Common myeloid progenitor, CD34-positive (primary cell): ENCODE measurements at regions of chr1 and their contacts with region 1.

Region 1: GRCh38 chr1:27102707-27103491 is 52.0 kb downstream of the SLC9A1 start:
- DNase-seq: peak; percentile 52 to 73 (median 62)
- H3K4me3 ChIP-seq: no peak overlapping the region
- H3K27ac ChIP-seq: no peak overlapping the region
- H3K4me1 ChIP-seq: peaks cover 0 to 35% (median 25%) of the 10 kb centered on the region in 4 experiments
- H3K27me3 ChIP-seq: no peaks in the 10 kb centered on the region

Region 2: DNA sequence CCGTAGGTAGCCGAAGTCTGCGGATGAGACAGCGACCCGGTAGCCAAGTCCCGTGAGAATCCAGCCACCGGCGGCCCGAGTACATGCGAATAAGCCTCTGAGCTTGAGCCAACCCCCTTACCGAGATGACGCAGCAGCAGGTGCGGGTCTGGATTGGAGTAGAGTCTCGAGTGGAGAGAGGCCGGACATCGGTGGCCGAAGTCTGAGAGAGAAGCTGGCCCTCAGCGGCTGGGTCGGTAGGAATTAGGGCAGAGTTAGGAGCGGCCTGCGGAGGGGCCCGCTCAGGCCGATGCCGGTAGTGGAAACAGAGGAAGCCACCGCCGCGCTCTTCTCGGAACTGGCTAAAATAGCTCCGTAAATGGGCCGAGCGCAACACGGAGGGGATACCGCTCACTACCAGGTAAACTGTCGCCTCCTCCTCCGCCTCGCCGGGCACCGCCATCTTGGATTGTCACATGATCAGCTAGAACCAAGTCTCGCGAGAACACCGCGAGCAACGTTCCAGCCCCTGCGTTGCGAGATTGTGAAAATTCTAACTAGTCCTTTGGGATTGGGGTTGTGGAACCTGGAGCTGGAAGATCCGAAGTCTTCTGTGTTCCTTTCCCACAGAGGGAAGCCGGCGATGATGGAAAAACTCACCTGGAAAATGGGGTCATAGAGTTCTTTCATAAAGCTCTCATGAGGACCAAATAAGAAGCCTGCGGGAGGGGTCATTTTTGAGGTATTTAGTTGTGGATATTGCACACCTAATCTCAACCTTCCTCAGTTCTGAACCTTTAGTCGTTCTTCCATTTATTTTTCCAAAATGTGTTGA is 202.7 kb before region 1 on chr1 and contains the start of gene GPATCH3:
- CTCF ChIA-PET with region 1: no interaction called
- POLR2A ChIA-PET with region 1: no interaction called
- DNase-seq: peak; percentile 88 to 93 (median 89)
- H3K4me3 ChIP-seq: peak within 1 kb of the TSS; percentile 86 to 97 (median 91)
- H3K27ac ChIP-seq: peak within 1 kb of the TSS; percentile 97 to 98
- H3K4me1 ChIP-seq: peaks cover 7 to 23% (median 19%) of the 10 kb centered on the region in 4 experiments
- H3K27me3 ChIP-seq: no peaks in the 10 kb centered on the region

Region 3: DNA sequence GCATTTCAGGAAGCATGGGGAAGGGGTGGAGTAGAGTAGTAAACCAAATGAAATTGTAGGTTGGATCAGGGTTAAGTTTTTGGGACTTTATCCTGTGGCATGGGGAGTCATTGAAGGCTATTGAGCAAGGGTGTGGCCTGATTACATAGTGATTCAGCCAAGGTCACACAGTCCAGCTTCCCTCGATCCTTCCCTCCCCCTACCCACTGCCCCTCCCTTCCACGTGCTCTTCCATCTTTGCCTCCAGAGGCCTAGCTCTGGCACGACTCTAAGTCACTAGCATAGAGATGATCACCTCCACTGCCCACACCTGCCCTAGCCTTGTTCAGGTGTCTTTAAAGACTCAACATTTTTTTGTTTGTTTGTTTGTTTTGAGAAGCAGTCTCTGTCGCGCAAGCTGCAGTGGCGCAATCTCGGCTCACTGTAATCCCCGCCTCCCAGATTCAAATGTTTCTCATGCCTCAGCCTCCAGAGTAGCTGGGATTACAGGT is 89.2 kb after region 1 on chr1:
- CTCF ChIA-PET with region 1: interaction called, 14 read pairs
- POLR2A ChIA-PET with region 1: no interaction called
- DNase-seq: no peak
- H3K4me3 ChIP-seq: no peak overlapping the region
- H3K27ac ChIP-seq: no peak overlapping the region
- H3K4me1 ChIP-seq: no peaks in the 10 kb centered on the region
- H3K27me3 ChIP-seq: no peaks in the 10 kb centered on the region